WTC11 (cell line): ENCODE measurements at regions of chr12 and their contacts with region 1.

Region 1: DNA sequence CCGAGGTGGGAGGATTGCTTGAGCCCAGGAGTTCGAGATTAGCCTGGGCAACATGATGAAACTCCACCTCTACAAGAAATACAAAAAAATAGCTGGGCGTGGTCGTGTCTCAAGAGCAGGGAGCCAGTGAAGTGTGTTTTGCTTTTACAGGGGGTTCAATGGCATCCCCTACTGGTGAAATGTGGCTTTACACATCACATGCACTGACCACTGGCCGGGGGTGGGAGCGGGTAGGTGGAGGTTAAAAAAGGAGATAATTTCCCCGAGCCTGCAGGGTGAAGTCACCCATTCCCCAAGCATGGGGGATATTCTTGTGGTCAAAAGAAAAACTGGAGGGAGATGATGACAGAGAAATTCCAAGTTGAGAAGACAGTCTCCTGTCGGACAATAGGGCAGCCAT is 63.6 kb upstream of the PWP1 start:
- DNase-seq: peak; percentile 61
- ATAC-seq: peak; percentile 83
- H3K4me3 Mint-ChIP-seq: no peak overlapping the region
- H3K27ac Mint-ChIP-seq: no peak overlapping the region
- H3K4me1 Mint-ChIP-seq: 0 out of 2 replicates have a peak, but pooled peaks cover 4% of the 10 kb centered on the region
- H3K27me3 Mint-ChIP-seq: no peaks in the 10 kb centered on the region; the same call in 1 of the 2 replicates
- CTCF ChIP-seq: peak; percentile 89

Region 2: DNA sequence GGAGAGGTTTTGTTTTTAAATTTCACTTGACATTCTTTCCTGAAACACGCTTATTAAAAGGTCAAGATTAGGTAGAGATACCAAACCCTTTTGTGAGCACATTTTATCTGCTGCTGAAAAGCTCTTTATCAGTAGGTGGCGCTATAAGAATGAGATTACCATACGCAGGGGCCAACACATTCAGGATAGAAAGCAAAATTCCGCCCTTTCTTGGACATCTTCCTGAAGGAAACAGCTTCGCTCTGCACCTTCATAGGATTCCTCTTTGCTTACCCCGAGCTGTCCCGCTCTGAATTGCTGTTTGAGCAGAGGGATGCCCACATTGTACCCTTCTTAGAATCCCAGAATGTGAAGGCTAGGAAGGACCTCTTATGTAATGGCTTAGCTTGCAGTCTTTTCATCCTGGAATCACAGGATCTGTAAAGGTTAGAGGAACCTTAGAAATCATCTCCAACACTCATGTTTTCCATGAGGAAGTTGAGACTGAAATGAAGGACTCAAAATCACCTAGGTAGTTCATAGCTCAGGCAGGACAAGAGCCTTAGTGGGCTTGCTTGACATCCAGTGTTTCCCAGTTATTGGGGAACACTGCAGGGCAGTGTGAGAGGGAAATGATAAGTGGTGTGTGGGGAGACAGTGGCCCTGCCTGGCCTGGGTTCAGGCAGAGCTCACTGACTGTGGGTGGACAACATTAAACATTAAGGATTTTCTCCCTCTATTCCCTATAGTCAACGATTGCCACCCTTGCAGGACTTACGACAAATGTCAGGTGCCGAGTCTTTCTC is 490.0 kb before region 1 on chr12:
- CTCF ChIA-PET with region 1: interaction called, 12 read pairs
- POLR2A ChIA-PET with region 1: no interaction called
- DNase-seq: no peak
- ATAC-seq: peak; percentile 52
- H3K4me3 Mint-ChIP-seq: no peak overlapping the region
- H3K27ac Mint-ChIP-seq: no peak overlapping the region
- H3K4me1 Mint-ChIP-seq: peaks cover 34% of the 10 kb centered on the region
- H3K27me3 Mint-ChIP-seq: peaks cover 6% of the 10 kb centered on the region; the same call in 1 of the 2 replicates
- CTCF ChIP-seq: peak; percentile 37; the same call in 1 of the 2 replicates

Region 3: GRCh38 chr12:107635139-107635538 is 13.1 kb after region 1 on chr12:
- CTCF ChIA-PET with region 1: interaction called, 14 read pairs
- POLR2A ChIA-PET with region 1: no interaction called
- DNase-seq: peak; percentile 57
- ATAC-seq: peak; percentile 90
- H3K4me3 Mint-ChIP-seq: peak overlapping the region; percentile 49
- H3K27ac Mint-ChIP-seq: peak overlapping the region; percentile 99
- H3K4me1 Mint-ChIP-seq: peaks cover 53% of the 10 kb centered on the region
- H3K27me3 Mint-ChIP-seq: peaks cover 4% of the 10 kb centered on the region; the same call in 1 of the 2 replicates
- CTCF ChIP-seq: no peak